ENCODE measurements at regions of chr20 and their contacts with region 1.

Region 1: DNA sequence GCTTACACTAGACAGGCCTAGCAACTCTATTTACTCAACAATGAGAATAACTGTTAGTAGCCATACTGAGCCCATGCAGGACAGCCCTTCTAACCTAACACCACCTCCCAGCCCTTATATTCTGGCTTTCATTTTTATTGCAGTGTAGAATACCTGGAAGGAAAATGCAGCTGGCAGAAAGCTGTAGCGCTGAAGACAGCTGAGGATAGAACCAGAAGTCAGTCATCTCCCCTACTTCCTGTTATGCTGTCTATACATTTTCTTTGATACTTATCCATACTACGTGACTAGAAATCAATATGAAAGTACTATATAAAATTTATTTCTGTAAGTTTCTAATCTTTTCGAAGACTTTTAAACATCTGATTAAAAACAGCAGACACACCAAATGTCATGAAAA is 182.6 kb upstream of the SHLD1 start:
- DNase-seq: no peak

Region 2: DNA sequence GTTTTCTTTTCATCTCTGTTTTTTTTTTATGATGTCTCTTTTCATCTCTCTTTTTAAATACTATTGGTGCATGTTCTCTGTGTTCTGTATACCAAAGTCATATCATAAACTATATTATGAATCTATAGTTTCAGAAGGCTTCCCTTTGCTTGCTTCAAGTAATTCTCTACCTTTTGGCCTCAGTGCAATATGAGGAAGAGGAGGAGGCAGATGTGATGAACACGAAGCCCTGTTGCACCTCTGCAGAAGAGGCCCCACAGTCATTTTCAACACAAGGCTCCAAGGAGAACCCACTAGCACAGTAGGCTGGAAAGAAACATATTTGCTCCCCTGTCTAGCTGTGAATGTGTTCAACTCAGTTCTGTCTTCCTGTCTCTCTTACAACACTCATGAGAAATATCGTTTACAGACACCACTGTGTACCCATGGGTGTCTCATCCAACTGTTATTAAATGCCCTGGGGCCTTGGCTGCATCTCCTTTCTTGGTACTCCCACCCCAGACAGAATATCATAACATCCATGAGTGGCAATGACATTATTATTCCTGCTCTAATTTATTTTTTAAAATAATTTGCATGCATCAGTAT is 59.9 kb after region 1 on chr20:
- intact Hi-C with region 1: no loop called
- DNase-seq: no peak

Region 3: GRCh38 chr20:5749952-5750779 is 182.5 kb after region 1 on chr20 and contains the start of gene SHLD1:
- intact Hi-C with region 1: no loop called
- DNase-seq: peak; percentile 91
- total RNA-seq, gene SHLD1: 4.3 TPM

Region 4: DNA sequence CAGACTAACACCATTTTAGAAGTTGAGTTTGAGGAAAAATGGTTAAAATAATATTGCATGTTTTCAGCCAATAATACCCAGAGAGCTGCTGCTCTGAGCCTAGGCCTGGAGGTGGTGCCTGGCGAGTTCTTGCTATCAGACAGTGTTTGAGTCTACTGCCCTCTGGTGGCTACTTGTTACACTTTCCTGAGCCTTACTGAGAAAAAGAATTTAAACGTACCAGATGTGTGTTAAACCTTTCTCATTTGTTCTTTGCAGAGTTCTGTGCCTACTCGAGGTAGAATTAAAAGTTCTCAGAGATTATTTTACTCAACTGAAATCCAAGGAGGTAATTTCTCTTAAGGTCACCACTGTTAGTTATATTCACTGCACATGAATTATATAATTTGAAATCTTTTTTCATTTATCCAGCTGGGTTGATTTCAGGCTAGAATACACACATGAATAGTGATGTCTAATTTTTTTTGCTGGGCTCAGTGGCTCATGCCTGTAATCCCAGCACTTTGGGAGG is 220.8 kb after region 1 on chr20:
- intact Hi-C with region 1: loop called (anchors 1 kb)
- DNase-seq: peak; percentile 82

Measured in cardiac septum (tissue), 1 donor.